Sciatic nerve (tissue), 2 donors: ENCODE measurements at regions of chr4 and their contacts with region 1.

Region 1: DNA sequence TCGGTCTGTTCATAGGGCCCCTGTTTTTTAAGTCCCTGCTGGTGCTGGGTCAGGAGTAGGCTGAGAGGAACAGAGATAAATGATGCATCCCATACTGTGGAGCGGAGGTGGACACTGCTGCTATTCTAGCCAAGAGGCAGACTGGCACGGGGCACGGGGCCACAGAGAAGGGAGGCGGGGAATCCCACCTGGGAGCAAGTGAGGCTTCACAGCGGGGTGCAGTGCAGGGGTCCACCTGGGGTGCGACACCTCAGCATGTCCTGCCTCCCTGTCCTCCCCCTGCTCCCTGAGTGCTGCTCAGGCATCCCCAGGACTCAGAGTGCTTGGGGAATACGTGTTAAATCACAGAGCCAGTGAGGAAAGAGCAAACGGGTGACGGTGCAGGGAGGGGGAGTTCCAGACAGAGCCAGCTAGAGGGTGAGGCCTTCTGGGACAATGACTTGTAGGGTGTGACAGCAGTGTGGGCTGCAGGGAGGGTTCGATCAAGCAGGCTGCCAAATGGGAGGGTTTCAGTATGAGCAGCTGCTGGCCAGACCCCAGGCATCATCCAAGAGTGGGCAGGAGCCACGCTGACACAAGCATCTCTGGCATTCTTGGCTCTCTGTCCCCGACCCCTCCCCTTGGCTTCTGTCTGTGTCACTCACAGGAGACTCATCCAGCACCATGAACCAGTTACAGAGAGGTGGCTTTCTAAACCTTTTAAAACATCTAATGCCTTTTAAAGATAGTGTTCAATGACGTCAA is 13.7 kb upstream of the HTRA3 start:
- DNase-seq: no peak
- ATAC-seq: peak; percentile 42

Region 2: GRCh38 chr4:8303485-8304301 is 47.8 kb after region 1 on chr4:
- intact Hi-C with region 1: no loop called
- DNase-seq: peak; percentile 42
- ATAC-seq: no peak

Region 3: DNA sequence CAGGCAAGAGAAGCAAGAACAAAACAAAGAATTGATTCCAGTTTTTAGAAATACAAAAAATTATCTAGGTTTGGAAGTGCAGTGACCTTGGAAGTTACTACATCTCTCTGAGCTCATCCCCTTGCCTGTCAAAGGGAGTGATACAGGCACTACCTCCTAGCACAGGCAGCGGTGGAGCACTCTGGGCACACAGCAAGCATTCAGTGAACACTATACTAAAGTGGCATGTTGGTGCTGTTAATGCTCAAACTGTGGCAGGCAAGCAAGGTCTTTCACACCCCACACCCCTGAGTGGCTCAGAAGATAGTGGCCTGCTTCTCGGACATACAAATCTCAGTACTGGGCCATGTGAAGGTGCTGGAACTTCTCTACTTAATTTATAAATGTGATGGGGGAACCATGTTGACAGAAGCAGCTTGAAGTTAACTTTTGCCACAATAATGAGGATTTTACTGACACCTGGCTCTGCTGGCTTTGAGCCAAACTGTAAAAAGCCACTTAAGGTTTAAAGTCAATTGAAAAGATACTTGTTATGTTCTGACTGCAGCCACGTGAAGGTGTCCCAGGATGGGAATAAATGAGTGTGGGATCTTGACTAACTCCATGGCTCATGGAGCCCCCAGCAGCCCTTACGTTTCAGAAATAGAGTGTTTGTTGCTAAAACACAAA is 1576.9 kb after region 1 on chr4:
- intact Hi-C with region 1: loop called (anchors 5 kb)
- DNase-seq: no peak
- ATAC-seq: no peak